MCF 10A (cell line): ENCODE measurements at regions of chr14 and their contacts with region 1.

Region 1: GRCh38 chr14:64681796-64682710 is 22.2 kb upstream of the PLEKHG3 start:
- DNase-seq: peak; percentile 90
- H3K4me3 Mint-ChIP-seq: peak overlapping the region; percentile 50
- H3K27ac Mint-ChIP-seq: peak overlapping the region; percentile 98
- H3K4me1 Mint-ChIP-seq: peaks cover 26% of the 10 kb centered on the region
- H3K27me3 Mint-ChIP-seq: no peaks in the 10 kb centered on the region
- CTCF ChIP-seq: no peak

Region 2: GRCh38 chr14:64720131-64720576 is 38.1 kb after region 1 on chr14:
- CTCF ChIA-PET with region 1: interaction called, 4 read pairs
- POLR2A ChIA-PET with region 1: interaction called, 38 read pairs
- intact Hi-C with region 1: loop called (anchors 5 kb)
- DNase-seq: peak; percentile 95
- H3K4me3 Mint-ChIP-seq: peak overlapping the region; percentile 34
- H3K27ac Mint-ChIP-seq: peak overlapping the region; percentile 97
- H3K4me1 Mint-ChIP-seq: peaks cover 84% of the 10 kb centered on the region
- H3K27me3 Mint-ChIP-seq: no peaks in the 10 kb centered on the region
- CTCF ChIP-seq: no peak

Region 3: GRCh38 chr14:64726585-64726890 is 44.5 kb after region 1 on chr14:
- CTCF ChIA-PET with region 1: interaction called, 4 read pairs
- POLR2A ChIA-PET with region 1: interaction called, 38 read pairs
- intact Hi-C with region 1: loop called (anchors 5 kb)
- DNase-seq: peak; percentile 87
- H3K4me3 Mint-ChIP-seq: peak overlapping the region; percentile 23
- H3K27ac Mint-ChIP-seq: peak overlapping the region; percentile 90
- H3K4me1 Mint-ChIP-seq: peaks cover 34% of the 10 kb centered on the region
- H3K27me3 Mint-ChIP-seq: no peaks in the 10 kb centered on the region
- CTCF ChIP-seq: no peak

Region 4: DNA sequence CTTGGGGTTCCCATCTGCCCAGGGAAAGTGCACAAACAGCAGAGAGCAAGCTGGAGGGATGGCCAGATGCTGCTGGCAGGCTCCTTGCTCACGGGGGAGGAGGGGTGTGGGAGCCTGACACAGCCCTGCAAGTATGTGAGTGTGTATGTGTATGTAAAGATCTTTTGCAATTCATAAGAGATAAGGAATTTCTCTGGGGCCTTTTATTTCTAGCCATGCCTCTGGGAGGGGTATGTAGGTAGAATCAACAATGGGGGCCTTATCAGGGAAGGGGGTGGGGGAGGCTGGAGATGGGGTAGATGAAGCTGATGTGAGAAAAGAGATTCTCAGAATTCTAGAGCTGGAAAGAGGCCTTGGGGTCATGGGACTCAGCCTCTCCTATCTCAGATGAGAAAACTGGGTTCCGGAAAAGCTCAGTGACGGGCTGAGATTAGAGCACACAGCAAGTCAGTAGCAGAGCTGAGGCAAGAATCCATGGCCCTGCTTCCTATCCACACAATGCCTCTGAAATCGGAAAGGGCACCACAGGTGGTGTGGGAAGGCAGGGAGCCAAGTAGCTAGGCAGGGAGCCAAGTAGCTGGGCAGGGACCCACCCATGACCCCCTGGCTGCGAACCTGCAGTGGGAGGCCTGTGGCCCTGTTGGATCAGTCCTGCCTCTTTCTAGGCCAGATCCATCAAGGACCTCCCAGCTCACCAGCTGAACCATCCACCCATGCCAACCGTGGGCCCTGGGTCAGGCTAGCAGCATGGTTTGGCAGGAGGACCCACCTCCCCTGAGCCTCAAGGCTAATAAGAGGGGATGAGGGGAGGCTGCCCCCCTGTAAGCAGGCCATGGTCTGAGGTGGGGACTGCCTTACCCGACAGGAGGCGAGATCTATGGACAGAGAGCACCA is 76.9 kb after region 1 on chr14:
- CTCF ChIA-PET with region 1: interaction called, 10 read pairs
- POLR2A ChIA-PET with region 1: interaction called, 22 read pairs
- intact Hi-C with region 1: loop called (anchors 1 kb)
- DNase-seq: peak; percentile 65
- H3K4me3 Mint-ChIP-seq: peak overlapping the region; percentile 20
- H3K27ac Mint-ChIP-seq: peak overlapping the region; percentile 47
- H3K4me1 Mint-ChIP-seq: peaks cover 90% of the 10 kb centered on the region
- H3K27me3 Mint-ChIP-seq: no peaks in the 10 kb centered on the region
- CTCF ChIP-seq: no peak

Region 5: GRCh38 chr14:64764641-64765520 is 82.8 kb after region 1 on chr14:
- CTCF ChIA-PET with region 1: interaction called, 10 read pairs
- POLR2A ChIA-PET with region 1: interaction called, 22 read pairs
- intact Hi-C with region 1: no loop called
- DNase-seq: peak; percentile 75
- H3K4me3 Mint-ChIP-seq: no peak overlapping the region
- H3K27ac Mint-ChIP-seq: no peak overlapping the region
- H3K4me1 Mint-ChIP-seq: peaks cover 50% of the 10 kb centered on the region
- H3K27me3 Mint-ChIP-seq: no peaks in the 10 kb centered on the region
- CTCF ChIP-seq: peak; percentile 92

Region 6: DNA sequence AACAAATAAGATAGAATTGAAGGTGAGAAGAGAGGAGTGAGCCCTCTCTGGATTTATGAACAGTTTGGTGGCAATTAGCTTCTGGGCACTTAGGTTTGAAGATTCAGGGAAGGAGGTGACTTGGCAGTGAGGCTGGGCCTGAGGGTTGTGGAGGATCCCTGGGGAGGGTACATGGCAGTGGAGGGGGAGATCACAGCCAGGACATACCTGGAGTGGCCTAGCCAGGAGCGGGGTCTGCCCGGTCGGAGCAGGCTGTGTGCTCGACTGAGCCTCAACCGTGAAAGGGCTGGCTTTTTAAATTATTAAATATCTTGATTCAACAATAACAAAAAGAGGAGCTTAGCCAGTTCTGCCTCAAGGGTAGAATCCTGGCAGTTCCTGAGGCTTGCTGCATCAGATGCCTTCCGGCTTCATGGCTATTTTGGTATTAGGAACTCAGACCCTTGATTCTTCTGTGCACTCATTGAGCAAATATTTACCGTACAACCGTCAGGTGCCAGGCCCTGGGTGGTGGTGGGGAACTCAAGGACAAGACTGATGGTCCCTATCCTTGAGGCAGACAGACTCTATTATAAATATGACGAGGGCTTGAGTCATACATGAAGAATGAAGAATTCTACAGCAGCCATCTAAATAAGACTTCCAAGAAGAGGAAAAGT is 124.3 kb after region 1 on chr14:
- CTCF ChIA-PET with region 1: no interaction called
- POLR2A ChIA-PET with region 1: no interaction called
- intact Hi-C with region 1: loop called (anchors 1 kb)
- DNase-seq: peak; percentile 58
- H3K4me3 Mint-ChIP-seq: no peak overlapping the region
- H3K27ac Mint-ChIP-seq: peak overlapping the region; percentile 92
- H3K4me1 Mint-ChIP-seq: peaks cover 21% of the 10 kb centered on the region
- H3K27me3 Mint-ChIP-seq: no peaks in the 10 kb centered on the region
- CTCF ChIP-seq: no peak